Ovary (tissue), 10 donors: ENCODE measurements at regions of chr15 and their contacts with region 1.

Region 1: GRCh38 chr15:27679731-27680471 is 419.2 kb downstream of the OCA2 start:
- DNase-seq: no peak
- H3K4me3 ChIP-seq: no peak overlapping the region
- H3K27ac ChIP-seq: no peak overlapping the region
- H3K4me1 ChIP-seq: no peaks in the 10 kb centered on the region
- H3K27me3 ChIP-seq: no peaks in the 10 kb centered on the region
- CTCF ChIP-seq: no peak
- EP300 ChIP-seq: no peak
- POLR2A ChIP-seq: no peak

Region 2: GRCh38 chr15:26873846-26874245 is 806.1 kb before region 1 on chr15:
- intact Hi-C with region 1: loop called in 1 of 4 experiments (anchors 10 kb)
- DNase-seq: no peak
- H3K4me3 ChIP-seq: no peak overlapping the region
- H3K27ac ChIP-seq: no peak overlapping the region
- H3K4me1 ChIP-seq: no peaks in the 10 kb centered on the region
- H3K27me3 ChIP-seq: no peaks in the 10 kb centered on the region
- CTCF ChIP-seq: no peak
- EP300 ChIP-seq: no peak
- POLR2A ChIP-seq: no peak

Region 3: DNA sequence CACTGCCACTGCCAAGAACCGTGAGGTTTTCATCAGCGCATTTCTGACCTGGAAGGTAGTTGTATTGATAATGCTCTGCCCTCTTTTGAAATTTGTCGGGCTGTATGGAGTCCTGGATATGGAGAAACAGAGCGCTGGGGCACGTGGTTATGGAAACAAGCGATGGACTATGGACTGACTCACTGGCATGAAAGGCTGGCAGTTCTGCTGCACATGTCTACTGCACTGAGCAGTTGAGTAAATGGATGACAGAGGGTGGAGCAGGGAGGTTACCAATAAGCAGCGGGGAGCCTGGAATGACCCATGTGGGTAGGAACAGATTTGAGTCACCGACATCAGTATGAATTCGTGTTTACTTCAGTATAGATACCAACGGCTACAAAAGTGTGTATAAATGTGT is 10.3 kb before region 1 on chr15:
- intact Hi-C with region 1: no loop called
- DNase-seq: no peak
- H3K4me3 ChIP-seq: no peak overlapping the region
- H3K27ac ChIP-seq: no peak overlapping the region
- H3K4me1 ChIP-seq: no peaks in the 10 kb centered on the region
- H3K27me3 ChIP-seq: no peaks in the 10 kb centered on the region
- CTCF ChIP-seq: no peak
- EP300 ChIP-seq: no peak
- POLR2A ChIP-seq: no peak

Region 4: DNA sequence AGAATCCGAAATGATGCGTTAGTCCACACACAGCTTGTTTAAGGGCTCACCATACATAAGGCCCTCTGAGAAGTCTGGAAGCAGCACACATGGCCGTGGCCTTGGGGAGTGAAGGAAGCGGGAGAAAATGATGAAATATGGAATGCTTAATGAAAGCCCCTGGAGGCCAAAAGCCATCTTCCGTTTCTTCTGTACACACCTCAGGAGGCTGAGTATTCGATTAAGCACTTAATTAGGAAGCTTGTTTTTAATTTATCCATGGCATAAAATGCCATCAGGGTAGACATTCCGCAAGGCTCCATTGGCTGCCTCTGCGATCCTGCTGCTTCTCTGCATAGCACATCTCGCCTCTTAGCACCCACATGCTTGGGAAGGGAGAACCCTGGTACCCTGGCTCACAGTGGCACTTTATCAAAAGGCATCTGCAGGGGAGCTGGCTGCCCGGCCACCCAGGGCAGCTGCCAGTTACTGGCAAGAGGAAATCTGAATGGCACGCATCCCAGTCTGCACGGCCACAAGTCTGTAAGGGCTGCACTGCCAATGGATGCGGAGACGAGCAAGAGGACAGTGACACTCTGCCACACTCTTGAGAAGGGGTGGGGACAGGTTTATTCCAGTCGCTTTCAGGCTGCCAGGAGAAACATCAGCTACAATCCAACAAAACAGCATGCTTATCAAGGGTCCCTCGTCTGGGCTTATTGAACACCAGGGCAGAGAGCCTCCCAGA is 63.0 kb after region 1 on chr15:
- intact Hi-C with region 1: no loop called
- DNase-seq: no peak
- H3K4me3 ChIP-seq: no peak overlapping the region
- H3K27ac ChIP-seq: no peak overlapping the region
- H3K4me1 ChIP-seq: no peaks in the 10 kb centered on the region
- H3K27me3 ChIP-seq: no peaks in the 10 kb centered on the region
- CTCF ChIP-seq: no peak
- EP300 ChIP-seq: no peak
- POLR2A ChIP-seq: no peak